CD4-positive, alpha-beta memory T cell (primary cell): ENCODE measurements at regions of chr7 and their contacts with region 1.

Region 1: DNA sequence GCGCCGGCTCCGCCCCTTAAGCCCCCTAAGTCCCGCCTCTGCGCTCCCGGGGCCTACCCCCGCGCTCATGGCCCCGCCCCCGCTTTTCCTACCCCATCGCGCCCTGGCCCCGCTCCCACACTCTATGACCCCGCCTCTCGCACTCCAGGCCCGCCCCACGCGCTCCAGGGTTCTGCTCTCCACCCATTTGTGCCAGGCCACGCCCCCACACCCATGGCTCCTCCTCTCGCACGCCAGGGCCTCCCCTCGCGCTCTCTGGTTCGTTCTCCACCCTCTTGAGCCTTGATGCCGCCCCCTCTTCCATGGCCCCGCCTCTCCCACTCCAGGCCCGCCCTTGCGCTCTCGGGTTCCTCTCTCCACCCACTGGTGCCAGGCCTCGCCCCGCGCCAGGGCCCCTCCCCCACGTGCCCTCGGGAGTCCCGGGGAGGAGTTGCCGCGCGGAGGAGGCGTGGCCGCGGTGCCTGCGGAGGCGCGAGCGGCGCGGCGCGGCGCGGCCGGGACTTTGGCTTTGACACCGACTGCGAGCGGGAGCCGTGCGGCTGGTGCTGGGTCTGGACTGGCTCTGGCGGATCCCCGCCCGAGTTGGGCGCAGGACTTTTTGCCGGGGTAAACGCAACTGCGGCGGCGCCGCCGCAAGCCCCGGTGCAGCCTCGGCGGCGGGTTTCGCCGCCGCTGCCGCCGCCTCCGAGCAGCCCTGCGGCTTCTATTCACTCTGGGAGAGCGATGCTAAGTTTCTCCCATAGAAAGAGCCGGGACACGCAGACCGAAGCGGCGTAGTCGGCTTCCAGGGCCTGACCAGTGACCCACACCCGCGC is at the start of gene EEPD1:
- DNase-seq: peak; percentile 99 to 100 (median 100)
- H3K4me3 ChIP-seq: peak within 1 kb of the TSS; percentile 63 to 72
- H3K4me3 Mint-ChIP-seq: peak within 1 kb of the TSS; percentile 81 to 87 (median 84)
- H3K27ac ChIP-seq: peak within 1 kb of the TSS; percentile 53
- H3K27ac Mint-ChIP-seq: peak within 1 kb of the TSS; percentile 46 to 82 (median 73)
- H3K4me1 ChIP-seq: peaks cover 44% of the 10 kb centered on the region
- H3K4me1 Mint-ChIP-seq: peaks cover 17 to 48% (median 42%) of the 10 kb centered on the region in 4 donors
- H3K27me3 ChIP-seq: no peaks in the 10 kb centered on the region
- H3K27me3 Mint-ChIP-seq: no peaks in the 10 kb centered on the region
- total RNA-seq, gene EEPD1: 6.3 to 8.0 TPM

Region 2: GRCh38 chr7:35993676-35994606 is 159.0 kb before region 1 on chr7:
- CTCF ChIA-PET with region 1: no interaction called
- POLR2A ChIA-PET with region 1: no interaction called
- intact Hi-C with region 1: loop called (anchors 10 kb)
- DNase-seq: no peak
- H3K4me3 ChIP-seq: no peak overlapping the region
- H3K4me3 Mint-ChIP-seq: no peak overlapping the region
- H3K27ac ChIP-seq: no peak overlapping the region
- H3K27ac Mint-ChIP-seq: no peak overlapping the region
- H3K4me1 ChIP-seq: no peaks in the 10 kb centered on the region
- H3K4me1 Mint-ChIP-seq: no peaks in the 10 kb centered on the region
- H3K27me3 ChIP-seq: no peaks in the 10 kb centered on the region
- H3K27me3 Mint-ChIP-seq: no peaks in the 10 kb centered on the region

Region 3: GRCh38 chr7:36107926-36108631 is 44.9 kb before region 1 on chr7:
- CTCF ChIA-PET with region 1: no interaction called
- POLR2A ChIA-PET with region 1: no interaction called
- intact Hi-C with region 1: loop called (anchors 2 kb)
- DNase-seq: no peak
- H3K4me3 ChIP-seq: no peak overlapping the region
- H3K4me3 Mint-ChIP-seq: no peak overlapping the region
- H3K27ac ChIP-seq: no peak overlapping the region
- H3K27ac Mint-ChIP-seq: no peak overlapping the region
- H3K4me1 ChIP-seq: no peaks in the 10 kb centered on the region
- H3K4me1 Mint-ChIP-seq: peaks cover 0 to 3% (median 0%) of the 10 kb centered on the region in 4 donors
- H3K27me3 ChIP-seq: no peaks in the 10 kb centered on the region
- H3K27me3 Mint-ChIP-seq: no peaks in the 10 kb centered on the region

Region 4: GRCh38 chr7:36286226-36286625 is 133.3 kb after region 1 on chr7:
- CTCF ChIA-PET with region 1: interaction called, 7 read pairs
- POLR2A ChIA-PET with region 1: interaction called, 3 read pairs
- intact Hi-C with region 1: loop called (anchors 1 kb)
- DNase-seq: peak; percentile 76 to 91 (median 83)
- H3K4me3 ChIP-seq: peak overlapping the region in 1 of 2 donors; percentile 23
- H3K4me3 Mint-ChIP-seq: peak overlapping the region; percentile 76 to 98 (median 92)
- H3K27ac ChIP-seq: peak overlapping the region; percentile 78
- H3K27ac Mint-ChIP-seq: peak overlapping the region; percentile 95 to 100 (median 100)
- H3K4me1 ChIP-seq: peaks cover 91% of the 10 kb centered on the region
- H3K4me1 Mint-ChIP-seq: peaks cover 44 to 96% (median 77%) of the 10 kb centered on the region in 4 donors
- H3K27me3 ChIP-seq: no peaks in the 10 kb centered on the region
- H3K27me3 Mint-ChIP-seq: no peaks in the 10 kb centered on the region

Region 5: DNA sequence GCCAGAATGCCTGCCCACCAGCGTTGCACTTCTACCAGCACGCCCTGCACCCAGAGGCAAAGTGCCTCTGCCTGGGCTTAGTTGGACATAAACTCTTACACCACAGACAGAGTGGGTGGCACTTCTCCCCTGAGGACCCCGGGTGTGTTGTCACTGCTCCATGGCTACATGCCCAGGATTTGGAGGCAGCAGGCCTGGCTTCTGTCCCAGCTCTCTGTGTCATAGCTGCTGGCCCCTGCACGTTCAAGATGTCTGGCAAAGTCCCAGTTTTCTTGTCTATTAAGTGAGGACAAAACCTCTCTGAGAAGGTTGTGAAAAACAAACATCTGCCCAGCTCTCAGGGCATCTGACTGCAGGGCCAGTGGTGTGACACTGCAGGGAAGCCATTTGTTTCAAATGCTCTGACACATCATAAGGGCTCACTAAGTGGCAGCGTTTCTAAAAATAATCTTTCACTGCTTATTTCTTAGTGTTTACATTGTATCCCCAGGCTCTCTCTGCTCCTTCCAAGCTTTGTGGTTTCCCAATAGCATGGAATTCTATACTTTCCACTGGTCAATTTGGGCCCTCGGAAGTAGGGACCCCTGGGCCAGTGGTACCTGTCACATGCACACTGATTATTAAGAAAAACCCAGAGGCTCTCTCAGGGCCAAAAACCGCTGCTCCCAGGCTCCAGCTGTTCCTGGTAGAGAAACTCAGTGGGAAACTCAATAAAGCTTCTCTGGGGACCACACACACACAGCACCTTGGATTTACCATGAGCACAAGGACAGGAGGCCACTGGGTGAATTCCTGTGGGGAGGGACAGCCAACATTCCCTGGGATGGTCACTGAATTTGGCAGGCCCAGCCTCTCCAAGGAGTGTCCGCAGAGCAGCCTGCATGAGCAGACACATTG is 150.5 kb after region 1 on chr7:
- CTCF ChIA-PET with region 1: no interaction called
- POLR2A ChIA-PET with region 1: no interaction called
- intact Hi-C with region 1: no loop called
- DNase-seq: no peak
- H3K4me3 ChIP-seq: no peak overlapping the region
- H3K4me3 Mint-ChIP-seq: no peak overlapping the region
- H3K27ac ChIP-seq: no peak overlapping the region
- H3K27ac Mint-ChIP-seq: peak overlapping the region in 3 of 7 donors; percentile 29 to 84 (median 49)
- H3K4me1 ChIP-seq: no peaks in the 10 kb centered on the region
- H3K4me1 Mint-ChIP-seq: no peaks in the 10 kb centered on the region
- H3K27me3 ChIP-seq: no peaks in the 10 kb centered on the region
- H3K27me3 Mint-ChIP-seq: no peaks in the 10 kb centered on the region

Region 6: DNA sequence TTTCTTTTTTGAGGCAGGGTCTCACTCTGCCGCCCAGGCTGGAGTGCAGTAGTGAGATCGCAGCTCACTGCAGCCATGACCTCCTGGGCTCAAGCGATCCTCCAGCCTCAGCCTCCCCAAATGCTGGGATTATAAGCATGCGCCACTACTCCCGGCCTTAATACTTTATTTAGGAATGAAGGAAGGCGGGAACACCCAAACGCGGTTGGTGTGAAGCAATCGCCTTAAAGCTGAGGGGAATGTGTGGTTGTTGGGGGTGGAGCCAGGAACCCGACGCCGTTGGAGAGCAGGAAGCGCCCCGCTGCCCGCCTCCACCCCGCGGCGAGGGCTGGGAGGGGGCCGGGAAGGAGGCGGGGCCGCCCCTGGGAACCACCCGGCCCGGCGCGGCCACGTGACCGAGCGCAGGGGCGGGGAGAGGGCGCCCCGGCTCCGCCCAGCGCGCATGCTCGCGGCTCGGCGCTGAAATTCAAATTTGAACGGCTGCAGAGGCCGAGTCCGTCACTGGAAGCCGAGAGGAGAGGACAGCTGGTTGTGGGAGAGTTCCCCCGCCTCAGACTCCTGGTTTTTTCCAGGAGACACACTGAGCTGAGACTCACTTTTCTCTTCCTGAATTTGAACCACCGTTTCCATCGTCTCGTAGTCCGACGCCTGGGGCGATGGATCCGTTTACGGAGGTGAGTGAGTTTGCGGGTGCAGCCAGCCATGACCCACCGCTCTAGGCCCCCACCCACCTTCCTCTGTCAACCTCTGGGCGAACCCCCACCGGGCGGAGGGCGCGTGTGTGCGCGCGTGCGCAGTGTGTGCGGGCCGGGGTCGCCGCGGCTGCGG is 236.6 kb after region 1 on chr7 and contains the start of gene ANLN:
- CTCF ChIA-PET with region 1: no interaction called
- POLR2A ChIA-PET with region 1: no interaction called
- intact Hi-C with region 1: loop called (anchors 5 kb)
- DNase-seq: peak; percentile 80 to 86 (median 85)
- H3K4me3 ChIP-seq: peak within 1 kb of the TSS; percentile 82 to 84
- H3K4me3 Mint-ChIP-seq: peak within 1 kb of the TSS; percentile 77 to 91 (median 86)
- H3K27ac ChIP-seq: peak within 1 kb of the TSS; percentile 50
- H3K27ac Mint-ChIP-seq: peak within 1 kb of the TSS; percentile 73 to 93 (median 85)
- H3K4me1 ChIP-seq: peaks cover 16% of the 10 kb centered on the region
- H3K4me1 Mint-ChIP-seq: peaks cover 15 to 28% (median 21%) of the 10 kb centered on the region in 4 donors
- H3K27me3 ChIP-seq: no peaks in the 10 kb centered on the region
- H3K27me3 Mint-ChIP-seq: peaks cover 0 to 1% of the 10 kb centered on the region in 2 donors
- total RNA-seq, gene ANLN: 0.23 TPM in 1 of 2 experiments, not detected in the other